Activated T-helper 1 cell treated with anti-CD3 and anti-CD28 coated beads, Interleukin-12 subunit alpha, Interleukin-12 subunit beta, Interleukin-2, Interleukin-4 antibody, amounts not matched to agents 30 ng/mL and 10 ng/mL and 1 ng/mL, durations not matched to agents 14 hours and 24 hours and 36 hours (primary cell): ENCODE measurements at regions of chr14 and their contacts with region 1.

Region 1: DNA sequence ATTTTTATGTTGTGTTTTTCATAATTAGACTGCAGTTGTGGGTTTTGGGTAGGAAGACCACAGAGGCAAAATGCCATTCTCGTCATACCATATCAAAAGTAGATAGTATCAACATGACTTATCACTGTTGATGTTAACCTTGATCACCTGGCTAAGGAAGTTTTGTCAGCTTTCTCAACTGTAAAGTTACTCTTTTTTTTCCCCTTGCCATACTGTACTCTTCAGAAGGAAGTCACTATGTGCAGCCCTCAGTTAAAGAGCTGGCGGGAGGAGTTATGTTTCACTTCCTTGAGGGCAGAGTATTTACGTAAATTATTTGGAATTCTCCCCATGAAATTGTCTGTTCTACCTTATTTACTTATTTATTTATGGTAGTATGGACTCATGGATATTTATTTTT is 78.7 kb downstream of the PRORP start:
- DNase-seq: no peak
- H3K4me3 Mint-ChIP-seq: peak overlapping the region; percentile 52
- H3K27ac Mint-ChIP-seq: peak overlapping the region; percentile 75
- H3K4me1 Mint-ChIP-seq: peaks cover 51% of the 10 kb centered on the region
- H3K27me3 Mint-ChIP-seq: no peaks in the 10 kb centered on the region

Region 2: DNA sequence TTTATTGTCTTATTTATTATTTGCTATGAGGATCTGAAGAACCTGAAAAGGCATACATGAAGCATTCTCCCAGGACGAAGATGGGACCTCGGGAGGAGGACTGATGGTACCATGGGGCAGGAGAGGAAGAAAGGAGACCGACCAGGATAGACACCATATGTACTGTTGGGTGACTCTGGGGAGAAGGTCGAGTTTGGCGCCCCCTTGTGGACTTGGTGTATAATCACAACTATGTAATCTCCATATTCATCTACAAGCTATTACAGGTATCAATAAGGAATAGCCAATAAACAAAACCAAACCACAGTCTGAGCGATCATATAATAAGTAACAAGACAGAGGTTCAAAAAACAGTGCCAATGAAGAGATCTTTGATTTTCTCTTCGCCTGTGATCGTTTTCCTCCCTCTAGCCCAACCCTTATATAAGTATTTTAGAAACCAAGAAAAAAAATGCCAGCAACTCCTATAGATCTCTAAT is 878.1 kb before region 1 on chr14:
- intact Hi-C with region 1: no loop called
- DNase-seq: peak; percentile 41
- H3K4me3 Mint-ChIP-seq: no peak overlapping the region
- H3K27ac Mint-ChIP-seq: no peak overlapping the region
- H3K4me1 Mint-ChIP-seq: no peaks in the 10 kb centered on the region
- H3K27me3 Mint-ChIP-seq: peaks cover 6% of the 10 kb centered on the region

Region 3: DNA sequence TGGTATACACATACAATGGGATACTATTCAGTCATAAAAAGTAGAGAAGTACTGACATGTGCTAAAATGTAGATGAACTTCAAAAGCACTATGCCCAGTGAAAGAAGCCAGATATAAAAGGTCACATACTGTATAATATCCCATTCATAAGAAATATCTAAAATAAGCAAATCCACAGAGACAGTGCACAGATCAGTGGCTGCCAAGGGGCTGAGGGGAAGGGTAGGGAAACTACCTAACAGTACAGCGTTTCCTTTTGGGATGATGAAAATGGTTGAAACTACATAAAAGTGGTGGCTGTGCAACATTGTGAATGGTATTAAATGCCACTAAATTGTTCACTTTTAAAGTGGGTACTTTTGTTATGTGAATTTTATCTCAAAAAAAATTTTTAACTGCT is 673.5 kb before region 1 on chr14:
- intact Hi-C with region 1: no loop called
- DNase-seq: no peak
- H3K4me3 Mint-ChIP-seq: no peak overlapping the region
- H3K27ac Mint-ChIP-seq: no peak overlapping the region
- H3K4me1 Mint-ChIP-seq: peaks cover 4% of the 10 kb centered on the region
- H3K27me3 Mint-ChIP-seq: no peaks in the 10 kb centered on the region

Region 4: GRCh38 chr14:35159742-35160409 is 41.2 kb before region 1 on chr14:
- intact Hi-C with region 1: loop called (anchors 1 kb)
- DNase-seq: no peak
- H3K4me3 Mint-ChIP-seq: peak overlapping the region; percentile 5
- H3K27ac Mint-ChIP-seq: peak overlapping the region; percentile 81
- H3K4me1 Mint-ChIP-seq: peaks cover 67% of the 10 kb centered on the region
- H3K27me3 Mint-ChIP-seq: no peaks in the 10 kb centered on the region

Region 5: GRCh38 chr14:35222872-35223466 is 21.9 kb after region 1 on chr14:
- intact Hi-C with region 1: loop called (anchors 2 kb)
- DNase-seq: no peak
- H3K4me3 Mint-ChIP-seq: no peak overlapping the region
- H3K27ac Mint-ChIP-seq: peak overlapping the region; percentile 57
- H3K4me1 Mint-ChIP-seq: peaks cover 39% of the 10 kb centered on the region
- H3K27me3 Mint-ChIP-seq: no peaks in the 10 kb centered on the region

Region 6: GRCh38 chr14:35336494-35337268 is 135.6 kb after region 1 on chr14:
- intact Hi-C with region 1: no loop called
- DNase-seq: no peak
- H3K4me3 Mint-ChIP-seq: no peak overlapping the region
- H3K27ac Mint-ChIP-seq: peak overlapping the region; percentile 7
- H3K4me1 Mint-ChIP-seq: peaks cover 49% of the 10 kb centered on the region
- H3K27me3 Mint-ChIP-seq: no peaks in the 10 kb centered on the region

Region 7: GRCh38 chr14:35425850-35426249 is 224.8 kb after region 1 on chr14:
- intact Hi-C with region 1: no loop called
- DNase-seq: no peak
- H3K4me3 Mint-ChIP-seq: no peak overlapping the region
- H3K27ac Mint-ChIP-seq: no peak overlapping the region
- H3K4me1 Mint-ChIP-seq: peaks cover 27% of the 10 kb centered on the region
- H3K27me3 Mint-ChIP-seq: peaks cover 2% of the 10 kb centered on the region